Activated CD8-positive, alpha-beta memory T cell treated with anti-CD3 and anti-CD28 coated beads, Interleukin-2, amount 10 ng/mL, durations not matched to agents 7 days and 5 days (primary cell): ENCODE measurements at regions of chr9 and their contacts with region 1.

Region 1: GRCh38 chr9:137188490-137189296 is at the starts of genes ANAPC2 and SSNA1:
- DNase-seq: peak; percentile 93
- ATAC-seq: peak; percentile 81
- H3K4me3 Mint-ChIP-seq: peak within 1 kb of the TSS; percentile 93
- H3K27ac Mint-ChIP-seq: peak within 1 kb of the TSS; percentile 92
- H3K4me1 Mint-ChIP-seq: peaks cover 35% of the 10 kb centered on the region
- H3K27me3 Mint-ChIP-seq: no peaks in the 10 kb centered on the region
- total RNA-seq, gene ANAPC2: 59.8 to 69.7 TPM
- total RNA-seq, gene SSNA1: 80.2 to 91.3 TPM

Region 2: DNA sequence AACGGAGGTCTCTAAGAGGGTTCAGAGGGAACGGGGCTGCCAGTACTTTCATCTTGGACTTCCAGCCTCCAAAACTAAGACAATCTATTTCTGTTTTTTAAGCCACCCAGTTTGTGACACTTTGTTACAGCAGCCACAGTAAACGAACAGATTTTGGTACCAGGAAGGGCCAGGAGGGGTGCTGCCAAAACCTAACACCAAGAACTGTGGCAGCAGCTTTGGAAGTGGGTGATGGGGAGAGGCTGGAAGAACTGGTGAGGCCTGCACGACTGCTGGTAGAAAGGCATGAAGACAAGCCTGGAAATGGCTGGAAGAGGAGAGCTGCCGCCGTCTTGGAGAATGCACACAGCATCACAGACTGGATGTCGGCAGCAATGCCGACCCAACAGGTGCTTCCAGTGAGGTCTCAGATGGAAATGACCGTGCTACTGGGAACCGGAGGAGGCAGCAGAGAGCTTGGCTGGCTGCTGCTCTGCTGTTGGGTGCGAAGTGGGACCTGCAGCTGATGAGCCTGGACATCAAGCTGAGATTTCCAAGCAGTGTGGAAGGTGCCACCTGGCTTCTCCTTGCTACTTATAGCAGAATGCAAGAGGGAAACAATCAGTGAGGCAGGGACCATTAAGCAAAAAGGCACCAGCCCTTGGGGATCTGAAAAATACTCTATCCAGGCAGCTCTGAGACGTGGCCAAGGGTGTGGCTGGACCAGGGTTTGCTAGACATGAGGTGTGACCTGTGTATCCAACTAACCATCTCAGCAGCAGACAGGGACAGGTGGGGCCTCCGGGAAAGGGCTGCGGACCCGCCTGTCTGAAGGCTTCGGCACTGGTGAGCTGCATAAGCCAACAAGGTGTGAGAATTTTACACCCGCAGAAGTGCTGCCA is 12.2 kb before region 1 on chr9:
- CTCF ChIA-PET with region 1: interaction called, 10 read pairs
- DNase-seq: peak; percentile 54
- ATAC-seq: peak; percentile 71
- H3K4me3 Mint-ChIP-seq: no peak overlapping the region
- H3K27ac Mint-ChIP-seq: no peak overlapping the region
- H3K4me1 Mint-ChIP-seq: no peaks in the 10 kb centered on the region
- H3K27me3 Mint-ChIP-seq: peaks cover 20% of the 10 kb centered on the region

Region 3: GRCh38 chr9:137200311-137201204 is 11.9 kb after region 1 on chr9 and contains the start of gene TPRN:
- CTCF ChIA-PET with region 1: interaction called, 55 read pairs
- DNase-seq: peak; percentile 100
- ATAC-seq: peak; percentile 95
- H3K4me3 Mint-ChIP-seq: peak within 1 kb of the TSS; percentile 85
- H3K27ac Mint-ChIP-seq: peak within 1 kb of the TSS; percentile 83
- H3K4me1 Mint-ChIP-seq: peaks cover 31% of the 10 kb centered on the region
- H3K27me3 Mint-ChIP-seq: no peaks in the 10 kb centered on the region
- total RNA-seq, gene TPRN: 11.1 to 13.3 TPM

Region 4: GRCh38 chr9:137213160-137214060 is 24.7 kb after region 1 on chr9:
- CTCF ChIA-PET with region 1: no interaction called
- DNase-seq: no peak
- ATAC-seq: no peak
- H3K4me3 Mint-ChIP-seq: no peak overlapping the region
- H3K27ac Mint-ChIP-seq: no peak overlapping the region
- H3K4me1 Mint-ChIP-seq: no peaks in the 10 kb centered on the region
- H3K27me3 Mint-ChIP-seq: no peaks in the 10 kb centered on the region

Region 5: DNA sequence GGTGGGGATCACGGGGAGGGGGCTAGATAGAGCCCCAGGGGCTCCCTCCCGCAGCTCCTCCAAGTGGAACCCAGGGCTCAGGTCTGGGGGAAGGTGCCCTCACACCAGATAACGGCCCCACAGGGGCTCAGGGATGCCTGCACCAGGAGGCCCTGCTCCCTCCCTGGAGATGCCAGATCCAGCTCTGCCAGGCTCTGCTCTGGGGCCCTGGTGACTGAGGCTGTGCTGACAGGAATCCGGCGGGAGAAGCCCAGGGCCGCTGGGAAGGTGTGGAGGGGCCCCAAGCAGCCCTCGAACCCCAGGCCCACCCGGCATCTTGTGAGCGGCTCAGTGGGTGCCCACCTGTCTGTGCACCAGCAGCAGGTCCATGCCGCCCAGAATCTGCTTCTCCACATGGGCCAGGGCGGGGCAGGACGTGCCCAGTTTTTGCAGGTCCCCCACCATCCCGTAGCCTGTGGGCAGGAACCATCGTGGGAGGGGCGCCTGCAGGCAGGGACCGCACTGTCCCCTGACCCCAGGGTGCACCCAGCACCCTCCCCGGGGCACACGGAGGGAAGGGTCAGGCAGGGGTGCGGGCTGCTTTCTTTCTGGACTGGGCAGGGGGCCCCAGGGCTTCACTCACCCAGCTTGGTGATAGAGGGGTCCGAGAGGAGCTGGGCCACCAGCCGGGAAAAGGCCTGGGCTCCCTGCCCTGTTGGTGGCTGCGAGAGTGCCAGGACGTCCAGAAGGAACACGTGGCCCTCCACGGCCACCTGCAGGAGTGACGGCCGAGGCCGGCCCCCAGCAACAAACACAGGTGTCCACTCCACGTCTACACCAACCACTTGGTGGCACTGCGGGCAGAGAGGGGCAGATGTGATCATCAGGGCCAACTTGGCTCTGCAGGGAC is 162.2 kb after region 1 on chr9:
- CTCF ChIA-PET with region 1: no interaction called
- DNase-seq: no peak
- ATAC-seq: no peak
- H3K4me3 Mint-ChIP-seq: no peak overlapping the region
- H3K27ac Mint-ChIP-seq: no peak overlapping the region
- H3K4me1 Mint-ChIP-seq: no peaks in the 10 kb centered on the region
- H3K27me3 Mint-ChIP-seq: no peaks in the 10 kb centered on the region